CD4-positive, alpha-beta T cell (primary cell): ENCODE measurements at regions of chr1 and their contacts with region 1.

Region 1: GRCh38 chr1:117758444-117759316 is 152.8 kb downstream of the TENT5C start:
- DNase-seq: peak; percentile 48 to 83 (median 56)
- ATAC-seq: peak; percentile 86
- H3K4me3 ChIP-seq: peak overlapping the region; percentile 52
- H3K4me3 Mint-ChIP-seq: peak overlapping the region; percentile 84
- H3K27ac ChIP-seq: no peak overlapping the region
- H3K27ac Mint-ChIP-seq: no peak overlapping the region
- H3K4me1 ChIP-seq: peaks cover 14% of the 10 kb centered on the region
- H3K4me1 Mint-ChIP-seq: peaks cover 10% of the 10 kb centered on the region
- H3K27me3 ChIP-seq: peaks cover 0 to 4% of the 10 kb centered on the region in 2 experiments
- H3K27me3 Mint-ChIP-seq: peaks cover 36% of the 10 kb centered on the region
- CTCF ChIP-seq: peak; percentile 95

Region 2: DNA sequence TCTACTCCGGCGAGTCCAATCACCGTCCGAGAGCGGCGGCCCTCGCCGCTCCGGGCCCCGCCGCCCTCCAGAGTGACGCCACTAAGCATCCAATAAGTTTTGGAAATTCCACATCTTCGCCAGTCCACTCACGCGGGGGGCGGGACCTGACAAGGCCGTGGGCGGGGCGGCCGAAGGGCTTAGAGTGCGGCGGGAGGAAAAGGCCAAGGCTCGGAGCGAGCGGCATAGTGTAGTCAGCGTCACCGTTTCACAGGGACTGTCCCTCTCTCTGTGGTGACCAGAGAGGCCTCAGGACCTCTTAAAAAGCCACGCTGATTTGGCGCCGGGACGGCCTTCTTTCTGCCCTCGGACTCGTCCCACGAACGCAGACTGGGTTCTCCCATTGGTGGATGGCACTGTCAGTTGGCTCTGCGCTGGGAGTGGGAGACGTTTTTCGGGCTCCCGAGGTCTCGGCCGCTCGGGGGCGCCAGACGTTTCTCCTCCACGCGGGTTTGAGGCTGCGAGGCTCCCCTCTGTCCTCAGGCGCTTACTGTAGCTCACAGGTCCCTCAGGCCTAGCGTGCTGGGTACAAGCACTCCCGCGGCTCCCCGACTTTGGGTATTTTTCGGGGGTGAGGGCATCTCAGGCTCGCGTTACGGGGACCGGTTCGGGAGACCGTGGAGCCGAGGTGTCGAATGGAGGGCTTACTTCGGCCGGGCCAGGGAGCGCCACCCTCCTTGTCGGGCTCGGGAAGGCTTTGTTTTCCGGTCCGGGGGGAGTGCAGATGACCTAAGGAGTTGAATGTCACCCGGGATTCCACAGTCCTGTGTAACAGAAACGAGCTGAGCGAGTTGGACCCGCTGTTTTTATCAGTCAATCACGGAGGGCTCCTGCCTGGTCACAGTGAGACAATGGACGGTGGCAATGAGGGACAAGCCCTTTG is 636.6 kb before region 1 on chr1:
- CTCF ChIA-PET with region 1: no interaction called
- POLR2A ChIA-PET with region 1: no interaction called
- intact Hi-C with region 1: loop called in 1 of 2 experiments (anchors 5 kb)
- DNase-seq: peak; percentile 69 to 92 (median 78)
- ATAC-seq: peak; percentile 89
- H3K4me3 ChIP-seq: peak overlapping the region; percentile 93
- H3K4me3 Mint-ChIP-seq: peak overlapping the region; percentile 87
- H3K27ac ChIP-seq: no peak overlapping the region
- H3K27ac Mint-ChIP-seq: no peak overlapping the region
- H3K4me1 ChIP-seq: peaks cover 17% of the 10 kb centered on the region
- H3K4me1 Mint-ChIP-seq: peaks cover 9% of the 10 kb centered on the region
- H3K27me3 ChIP-seq: peaks cover 0 to under 1% of the 10 kb centered on the region in 2 experiments
- H3K27me3 Mint-ChIP-seq: peaks cover 7% of the 10 kb centered on the region
- CTCF ChIP-seq: peak; percentile 78

Region 3: DNA sequence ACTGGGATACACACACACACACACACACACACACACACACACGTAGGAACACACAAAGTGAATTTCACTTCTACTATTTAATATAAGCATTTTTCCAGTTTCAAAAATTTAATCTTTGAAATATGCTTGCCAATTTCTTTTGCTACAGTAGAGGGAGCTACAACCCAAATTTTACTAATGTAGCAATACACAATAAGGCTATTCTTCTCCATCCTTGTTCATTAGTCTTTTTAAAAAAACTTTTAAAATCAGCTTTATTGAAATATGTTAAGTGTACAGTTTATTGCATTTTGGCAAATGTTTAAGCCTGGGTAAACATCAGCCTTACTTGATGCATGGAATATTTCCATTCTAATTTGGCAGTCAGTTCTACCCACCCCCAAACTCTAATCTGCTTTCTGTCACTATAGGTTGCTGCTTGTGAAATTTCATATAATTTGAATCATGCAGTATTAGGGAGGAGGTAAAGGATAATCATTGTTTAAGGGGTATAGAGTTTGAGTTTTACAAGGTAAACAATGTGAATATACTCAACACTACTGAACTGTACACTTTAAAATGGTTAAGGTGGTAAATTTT is 245.8 kb before region 1 on chr1:
- CTCF ChIA-PET with region 1: interaction called, 17 read pairs
- POLR2A ChIA-PET with region 1: interaction called, 4 read pairs
- intact Hi-C with region 1: loop called (anchors 1 kb)
- DNase-seq: peak in 3 of 14 experiments; percentile 40 to 52 (median 42)
- ATAC-seq: no peak
- H3K4me3 ChIP-seq: no peak overlapping the region
- H3K4me3 Mint-ChIP-seq: no peak overlapping the region
- H3K27ac ChIP-seq: no peak overlapping the region
- H3K27ac Mint-ChIP-seq: no peak overlapping the region
- H3K4me1 ChIP-seq: no peaks in the 10 kb centered on the region
- H3K4me1 Mint-ChIP-seq: no peaks in the 10 kb centered on the region
- H3K27me3 ChIP-seq: no peaks in the 10 kb centered on the region
- H3K27me3 Mint-ChIP-seq: no peaks in the 10 kb centered on the region
- CTCF ChIP-seq: peak; percentile 60